HCT116 (cell line): ENCODE measurements at regions of chr19 and their contacts with region 1.

Region 1: DNA sequence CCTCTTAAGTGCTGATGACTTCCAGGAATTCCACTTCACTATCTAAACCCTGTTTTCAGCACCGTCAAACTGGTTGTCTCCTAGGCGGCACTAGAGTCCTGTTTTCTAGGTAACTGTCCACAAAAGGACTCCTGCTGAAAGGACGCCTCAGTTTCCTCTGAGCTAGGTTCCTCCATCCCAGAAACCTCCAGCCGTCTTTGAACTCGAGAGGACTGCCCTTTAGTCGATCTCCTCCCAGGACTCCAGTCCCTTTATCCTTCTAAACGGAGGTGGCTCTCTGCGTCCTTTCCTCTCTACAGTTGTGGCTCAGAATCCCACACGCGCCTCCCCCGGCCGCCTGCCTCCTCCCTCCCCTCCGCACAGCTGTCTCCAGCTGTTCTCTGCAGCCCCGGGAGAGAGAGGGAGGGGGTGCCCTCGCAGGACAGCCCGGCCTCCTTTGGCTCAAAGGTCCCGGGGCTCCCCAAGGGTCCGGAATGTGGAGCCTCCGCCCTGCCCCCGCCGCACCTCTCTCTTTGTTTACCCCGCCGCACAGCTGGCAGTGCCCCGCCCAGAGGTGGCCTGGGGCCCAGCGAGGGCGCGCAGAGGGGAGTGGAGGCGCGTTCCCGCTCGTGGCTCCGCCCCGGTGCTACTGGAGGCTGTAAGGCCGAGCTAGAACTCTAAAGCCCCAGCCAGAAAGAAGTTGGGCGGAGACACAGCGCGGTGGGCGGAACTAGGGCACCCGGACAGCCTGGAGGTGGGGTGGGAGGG is 2.4 kb downstream of the LTBP4 start:
- DNase-seq: peak; percentile 99
- ATAC-seq: peak; percentile 68
- H3K4me3 ChIP-seq: peak overlapping the region; percentile 62 to 67
- H3K27ac ChIP-seq: peak overlapping the region; percentile 87
- H3K4me1 ChIP-seq: peaks cover 36 to 86% of the 10 kb centered on the region in 2 experiments
- H3K27me3 ChIP-seq: no peaks in the 10 kb centered on the region
- CTCF ChIP-seq: no peak
- POLR2A ChIP-seq: no peak
- RAD21 ChIP-seq: no peak

Region 2: GRCh38 chr19:40305403-40305802 is 298.2 kb before region 1 on chr19:
- CTCF ChIA-PET with region 1: interaction called, 29 read pairs
- POLR2A ChIA-PET with region 1: no interaction called
- RAD21 ChIA-PET with region 1: no interaction called
- intact Hi-C with region 1: loop called (anchors 1 kb)
- DNase-seq: peak; percentile 77
- ATAC-seq: peak; percentile 84
- H3K4me3 ChIP-seq: no peak overlapping the region
- H3K27ac ChIP-seq: no peak overlapping the region
- H3K4me1 ChIP-seq: no peaks in the 10 kb centered on the region
- H3K27me3 ChIP-seq: no peaks in the 10 kb centered on the region
- CTCF ChIP-seq: peak; percentile 66 to 94 (median 82)
- POLR2A ChIP-seq: no peak
- RAD21 ChIP-seq: peak; percentile 93

Region 3: DNA sequence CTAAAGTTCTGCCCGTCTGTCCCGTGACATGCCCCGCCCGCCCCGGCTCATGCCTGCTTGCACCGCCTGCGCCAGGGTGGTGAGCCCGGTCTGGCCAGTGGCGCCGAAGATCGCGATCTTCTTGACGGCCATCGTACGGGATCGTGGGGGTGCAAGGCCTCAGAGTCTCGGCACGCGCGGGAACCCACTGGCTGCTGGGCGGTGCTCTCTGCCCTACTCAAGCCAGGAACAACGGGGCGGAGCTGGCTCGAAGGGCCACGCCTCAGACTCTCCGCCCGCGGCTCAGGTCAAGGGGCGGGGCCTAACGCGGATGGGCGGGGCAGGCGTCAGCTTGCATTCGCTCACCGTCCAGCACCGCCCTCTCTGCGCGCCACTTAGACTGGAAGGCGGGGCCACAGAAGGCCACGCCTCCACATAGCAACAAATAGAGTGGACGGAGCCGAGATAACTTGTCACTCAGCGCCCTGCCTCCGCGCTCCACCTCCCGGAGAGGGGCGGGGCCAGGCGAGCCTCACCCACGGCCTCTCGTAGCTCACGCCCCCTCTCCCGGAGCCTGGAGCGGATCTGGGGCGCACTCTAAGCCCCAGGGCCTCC is 137.9 kb before region 1 on chr19 and contains the start of gene BLVRB:
- CTCF ChIA-PET with region 1: interaction called, 30 read pairs
- POLR2A ChIA-PET with region 1: interaction called, 23 read pairs
- RAD21 ChIA-PET with region 1: interaction called, 3 read pairs
- intact Hi-C with region 1: loop called (anchors 2 kb)
- DNase-seq: peak; percentile 98
- ATAC-seq: peak; percentile 88
- H3K4me3 ChIP-seq: peak within 1 kb of the TSS; percentile 93 to 95
- H3K27ac ChIP-seq: peak within 1 kb of the TSS; percentile 89
- H3K4me1 ChIP-seq: peaks cover 13 to 34% of the 10 kb centered on the region in 2 experiments
- H3K27me3 ChIP-seq: no peaks in the 10 kb centered on the region
- CTCF ChIP-seq: no peak
- POLR2A ChIP-seq: no peak
- RAD21 ChIP-seq: no peak
- total RNA-seq, gene BLVRB: 113 TPM

Region 4: GRCh38 chr19:40542202-40542859 is 61.2 kb before region 1 on chr19:
- CTCF ChIA-PET with region 1: interaction called, 20 read pairs
- POLR2A ChIA-PET with region 1: no interaction called
- RAD21 ChIA-PET with region 1: interaction called in 1 of 2 experiments, 3 read pairs
- intact Hi-C with region 1: no loop called
- DNase-seq: no peak
- ATAC-seq: no peak
- H3K4me3 ChIP-seq: no peak overlapping the region
- H3K27ac ChIP-seq: no peak overlapping the region
- H3K4me1 ChIP-seq: peaks cover 5 to 6% of the 10 kb centered on the region in 2 experiments; a peak in 2 of 4 replicates
- H3K27me3 ChIP-seq: no peaks in the 10 kb centered on the region
- CTCF ChIP-seq: no peak
- POLR2A ChIP-seq: no peak
- RAD21 ChIP-seq: no peak

Region 5: GRCh38 chr19:40570313-40571004 is 33.1 kb before region 1 on chr19:
- CTCF ChIA-PET with region 1: interaction called, 10 read pairs
- POLR2A ChIA-PET with region 1: interaction called, 5 read pairs
- RAD21 ChIA-PET with region 1: interaction called in 1 of 2 experiments, 3 read pairs
- intact Hi-C with region 1: no loop called
- DNase-seq: peak; percentile 99
- ATAC-seq: peak; percentile 93
- H3K4me3 ChIP-seq: peak overlapping the region; percentile 52 to 62
- H3K27ac ChIP-seq: peak overlapping the region; percentile 81
- H3K4me1 ChIP-seq: peaks cover 6 to 23% of the 10 kb centered on the region in 2 experiments
- H3K27me3 ChIP-seq: no peaks in the 10 kb centered on the region
- CTCF ChIP-seq: no peak
- POLR2A ChIP-seq: no peak
- RAD21 ChIP-seq: no peak